ENCODE measurements at regions of chr3 and their contacts with region 1.

Region 1: DNA sequence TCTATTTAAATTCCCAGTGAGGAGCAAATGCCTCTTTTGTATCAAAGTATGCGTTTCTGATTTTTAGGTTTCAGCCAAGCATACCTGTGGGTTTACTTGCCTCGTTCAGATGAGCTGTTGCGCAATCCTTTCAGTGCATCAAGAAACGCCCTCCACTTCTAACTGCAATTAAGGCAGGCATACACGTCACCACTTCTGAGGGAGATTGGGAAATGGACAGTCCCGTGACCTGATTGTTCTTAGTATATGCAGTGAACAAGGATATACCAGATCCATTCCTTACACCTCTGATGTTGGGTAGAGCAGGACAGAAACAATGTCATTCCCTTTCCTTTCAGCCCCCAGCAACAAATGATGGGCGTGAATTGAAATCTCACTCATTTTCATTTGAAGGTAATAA is 219.0 kb downstream of the ITPR1 start:
- DNase-seq: peak; percentile 44
- H3K4me3 Mint-ChIP-seq: no peak overlapping the region
- H3K27ac Mint-ChIP-seq: no peak overlapping the region
- H3K4me1 Mint-ChIP-seq: peaks cover 16% of the 10 kb centered on the region
- H3K27me3 Mint-ChIP-seq: no peaks in the 10 kb centered on the region
- CTCF ChIP-seq: no peak

Region 2: GRCh38 chr3:4245671-4246070 is 466.5 kb before region 1 on chr3:
- CTCF ChIA-PET with region 1: no interaction called
- intact Hi-C with region 1: no loop called
- DNase-seq: no peak
- H3K4me3 Mint-ChIP-seq: no peak overlapping the region
- H3K27ac Mint-ChIP-seq: no peak overlapping the region
- H3K4me1 Mint-ChIP-seq: no peaks in the 10 kb centered on the region
- H3K27me3 Mint-ChIP-seq: no peaks in the 10 kb centered on the region
- CTCF ChIP-seq: no peak

Region 3: DNA sequence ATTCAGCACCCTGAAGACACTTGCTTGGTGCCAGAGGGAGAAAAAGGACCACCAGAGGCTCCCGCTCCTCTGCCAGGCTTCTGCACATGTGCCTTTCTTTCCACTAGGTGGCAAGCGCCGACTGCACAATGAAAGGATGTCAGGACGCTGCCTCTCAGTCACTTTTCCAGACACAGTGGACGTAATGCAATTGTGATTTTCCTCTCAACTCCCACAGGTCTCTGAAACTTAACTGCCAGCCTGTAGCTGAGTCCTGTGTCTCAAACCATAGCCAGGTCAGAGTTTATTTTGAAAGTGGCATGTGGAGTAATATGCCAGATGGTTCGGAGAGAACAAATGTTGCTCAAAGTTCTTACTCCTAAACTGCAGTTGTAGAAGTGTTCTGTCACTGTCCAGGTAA is 56.1 kb before region 1 on chr3:
- CTCF ChIA-PET with region 1: interaction called, 3 read pairs
- intact Hi-C with region 1: loop called (anchors 2 kb)
- DNase-seq: peak; percentile 72
- H3K4me3 Mint-ChIP-seq: no peak overlapping the region
- H3K27ac Mint-ChIP-seq: no peak overlapping the region
- H3K4me1 Mint-ChIP-seq: peaks cover 7% of the 10 kb centered on the region
- H3K27me3 Mint-ChIP-seq: no peaks in the 10 kb centered on the region
- CTCF ChIP-seq: peak; percentile 90

Region 4: GRCh38 chr3:4786431-4786830 is 74.3 kb after region 1 on chr3:
- CTCF ChIA-PET with region 1: no interaction called
- intact Hi-C with region 1: no loop called
- DNase-seq: no peak
- H3K4me3 Mint-ChIP-seq: no peak overlapping the region
- H3K27ac Mint-ChIP-seq: no peak overlapping the region
- H3K4me1 Mint-ChIP-seq: no peaks in the 10 kb centered on the region
- H3K27me3 Mint-ChIP-seq: no peaks in the 10 kb centered on the region
- CTCF ChIP-seq: no peak

Region 5: DNA sequence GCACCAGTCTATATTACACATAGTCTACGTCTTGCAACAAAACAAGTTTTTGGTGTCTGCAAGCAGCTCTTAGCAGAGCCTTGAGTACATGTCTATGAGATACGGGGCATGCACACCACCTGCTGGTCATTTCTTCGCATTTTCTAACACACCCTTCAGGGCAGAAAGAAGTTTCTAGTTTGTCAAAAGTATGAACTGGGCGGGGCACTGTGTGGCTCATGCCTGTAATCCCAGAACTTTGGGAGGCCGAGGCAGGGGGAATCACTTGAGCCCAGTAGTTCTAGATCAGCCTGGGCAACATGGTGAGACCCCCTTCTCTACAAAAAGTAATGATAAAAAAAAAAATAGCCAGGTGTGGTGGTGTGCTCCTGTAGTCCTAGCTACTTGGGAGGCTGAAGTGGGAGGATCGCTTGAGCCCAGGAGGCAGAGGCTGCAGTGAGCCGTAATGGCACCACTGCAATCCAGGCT is 345.7 kb after region 1 on chr3:
- CTCF ChIA-PET with region 1: interaction called, 35 read pairs
- intact Hi-C with region 1: loop called (anchors 1 kb)
- DNase-seq: peak; percentile 74
- H3K4me3 Mint-ChIP-seq: no peak overlapping the region
- H3K27ac Mint-ChIP-seq: no peak overlapping the region
- H3K4me1 Mint-ChIP-seq: peaks cover 8% of the 10 kb centered on the region
- H3K27me3 Mint-ChIP-seq: peaks cover 13% of the 10 kb centered on the region
- CTCF ChIP-seq: peak; percentile 52

Region 6: GRCh38 chr3:5122030-5122740 is 410.0 kb after region 1 on chr3 and contains the start of gene ARL8B:
- CTCF ChIA-PET with region 1: interaction called, 5 read pairs
- intact Hi-C with region 1: loop called (anchors 5 kb)
- DNase-seq: peak; percentile 94
- H3K4me3 Mint-ChIP-seq: peak within 1 kb of the TSS; percentile 95
- H3K27ac Mint-ChIP-seq: peak within 1 kb of the TSS; percentile 73
- H3K4me1 Mint-ChIP-seq: peaks cover 8% of the 10 kb centered on the region
- H3K27me3 Mint-ChIP-seq: no peaks in the 10 kb centered on the region
- CTCF ChIP-seq: peak; percentile 81
- total RNA-seq, gene ARL8B: 44.2 and 47.0 TPM in 2 replicates